H1 (cell line): ENCODE measurements at regions of chr11 and their contacts with region 1.

Region 1: GRCh38 chr11:11958403-11959231 is 49.8 kb downstream of the DKK3 start:
- DNase-seq: no peak
- H3K4me3 ChIP-seq: no peak overlapping the region
- H3K27ac ChIP-seq: no peak overlapping the region
- H3K4me1 ChIP-seq: no peaks in the 10 kb centered on the region
- H3K27me3 ChIP-seq: no peaks in the 10 kb centered on the region
- CTCF ChIP-seq: no peak
- EP300 ChIP-seq: no peak
- POLR2A ChIP-seq: no peak
- RAD21 ChIP-seq: no peak

Region 2: GRCh38 chr11:11856638-11857037 is 102.0 kb before region 1 on chr11:
- CTCF ChIA-PET with region 1: no interaction called
- POLR2A ChIA-PET with region 1: no interaction called
- DNase-seq: no peak
- H3K4me3 ChIP-seq: no peak overlapping the region; a peak in 1 of 8 replicates
- H3K27ac ChIP-seq: no peak overlapping the region
- H3K4me1 ChIP-seq: peaks cover 0 to 7% (median 3%) of the 10 kb centered on the region in 4 experiments; a peak in 5 of 7 replicates
- H3K27me3 ChIP-seq: no peaks in the 10 kb centered on the region
- CTCF ChIP-seq: no peak
- EP300 ChIP-seq: no peak
- POLR2A ChIP-seq: no peak
- RAD21 ChIP-seq: no peak

Region 3: GRCh38 chr11:11946180-11946579 is 12.4 kb before region 1 on chr11:
- CTCF ChIA-PET with region 1: interaction called, 10 read pairs
- POLR2A ChIA-PET with region 1: interaction called, 4 read pairs
- DNase-seq: no peak
- H3K4me3 ChIP-seq: no peak overlapping the region
- H3K27ac ChIP-seq: no peak overlapping the region
- H3K4me1 ChIP-seq: no peaks in the 10 kb centered on the region
- H3K27me3 ChIP-seq: no peaks in the 10 kb centered on the region
- CTCF ChIP-seq: no peak
- EP300 ChIP-seq: no peak
- POLR2A ChIP-seq: no peak
- RAD21 ChIP-seq: no peak